OCI-LY7 (cell line): ENCODE measurements at regions of chr19 and their contacts with region 1.

Region 1: GRCh38 chr19:45717166-45717982 is 13.3 kb downstream of the FBXO46 start:
- DNase-seq: peak; percentile 99
- H3K4me3 ChIP-seq: peak overlapping the region; percentile 87
- H3K27ac ChIP-seq: peak overlapping the region; percentile 71
- H3K4me1 ChIP-seq: peaks cover 29% of the 10 kb centered on the region
- CTCF ChIP-seq: peak; percentile 55

Region 2: DNA sequence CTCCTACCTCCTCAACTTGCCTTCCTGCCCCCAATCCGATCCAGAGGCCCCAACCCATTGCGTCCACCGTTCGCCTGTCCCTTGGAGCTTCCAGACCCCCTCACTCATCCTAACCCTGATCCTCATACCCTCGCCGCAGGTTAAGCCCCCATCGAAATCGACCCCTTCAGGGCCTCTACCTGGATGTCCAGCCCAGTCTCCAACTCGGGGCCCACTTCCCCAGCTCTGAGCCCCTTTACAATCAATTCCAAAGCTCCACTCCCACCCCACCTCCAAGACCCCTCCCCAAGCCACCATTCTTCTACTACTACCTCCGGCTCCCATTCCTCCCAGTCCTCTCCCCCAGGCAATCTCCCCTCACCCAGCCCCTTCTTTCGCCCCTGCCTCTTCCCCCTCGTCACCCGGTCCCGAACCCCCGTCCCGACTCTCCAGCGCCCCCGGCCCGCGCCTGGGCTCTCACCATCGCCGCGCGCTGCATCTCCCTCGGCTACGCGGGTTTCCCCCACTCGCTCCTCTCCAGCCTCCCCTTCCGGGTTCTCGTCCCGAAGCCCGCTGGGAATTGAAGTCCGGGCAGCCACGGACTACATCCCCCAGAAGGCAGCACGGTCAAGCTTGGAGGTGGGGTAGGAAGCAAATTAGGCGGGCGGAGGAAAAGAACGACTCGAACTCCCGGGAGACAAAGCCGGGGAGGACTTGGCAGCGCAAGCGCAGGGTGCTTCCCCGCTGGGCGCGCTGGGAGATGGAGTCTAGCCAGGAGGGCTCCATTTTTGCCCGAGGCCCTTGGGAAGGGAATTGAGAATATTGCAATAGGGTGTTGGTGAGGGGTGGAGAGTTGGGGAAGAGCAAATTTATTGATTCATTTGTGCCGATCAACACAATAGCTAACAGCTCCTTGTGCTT is 13.3 kb after region 1 on chr19 and contains the start of gene FBXO46:
- CTCF ChIA-PET with region 1: no interaction called
- POLR2A ChIA-PET with region 1: interaction called, 13 read pairs
- intact Hi-C with region 1: no loop called
- DNase-seq: peak; percentile 99
- H3K4me3 ChIP-seq: peak within 1 kb of the TSS; percentile 97
- H3K27ac ChIP-seq: peak within 1 kb of the TSS; percentile 36
- H3K4me1 ChIP-seq: peaks cover 11% of the 10 kb centered on the region
- CTCF ChIP-seq: peak; percentile 68
- total RNA-seq, gene FBXO46: 23.9 and 27.5 TPM in 2 replicates

Region 3: DNA sequence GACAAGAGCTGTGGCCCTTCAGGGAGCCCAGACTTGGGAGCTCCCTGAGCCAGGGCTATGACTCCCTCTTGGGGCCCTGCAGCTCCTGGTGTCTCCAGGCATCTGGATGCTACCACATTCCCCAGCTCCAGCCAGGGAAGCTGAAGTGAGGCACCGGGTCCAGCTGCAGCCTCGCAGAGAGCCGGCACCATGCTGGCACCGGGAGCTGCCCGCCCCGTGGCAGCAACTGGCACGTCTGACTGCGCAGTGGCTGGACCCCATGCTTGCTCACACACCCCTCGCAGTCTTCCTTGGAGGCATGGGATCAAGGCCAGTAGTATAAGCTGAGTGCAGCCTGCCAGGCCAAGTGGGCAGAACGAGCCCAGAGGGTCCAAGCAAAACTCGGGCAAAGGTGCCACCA is 316.0 kb after region 1 on chr19:
- CTCF ChIA-PET with region 1: no interaction called
- POLR2A ChIA-PET with region 1: interaction called, 10 read pairs
- intact Hi-C with region 1: no loop called
- DNase-seq: no peak
- H3K4me3 ChIP-seq: no peak overlapping the region
- H3K27ac ChIP-seq: no peak overlapping the region
- H3K4me1 ChIP-seq: no peaks in the 10 kb centered on the region
- CTCF ChIP-seq: no peak

Region 4: DNA sequence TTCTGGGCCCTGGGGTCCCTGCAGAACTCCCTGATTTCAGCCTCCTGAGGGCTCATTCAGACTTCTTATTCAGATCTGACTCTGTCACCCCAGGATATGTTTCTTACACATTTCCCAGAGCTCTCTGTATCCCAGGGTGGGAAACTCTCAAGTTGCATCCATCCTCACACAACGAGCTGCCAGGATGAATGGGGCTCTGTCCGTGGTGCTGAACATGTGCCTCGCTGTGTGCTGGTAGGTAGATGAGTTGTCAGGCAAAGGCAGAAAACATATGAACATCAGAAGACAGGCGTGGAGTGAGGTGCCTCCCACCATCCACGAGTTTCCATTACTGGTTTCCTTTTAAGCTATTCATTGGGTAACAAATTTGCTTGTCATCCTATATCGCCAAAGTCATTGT is 500.8 kb after region 1 on chr19:
- CTCF ChIA-PET with region 1: no interaction called
- POLR2A ChIA-PET with region 1: no interaction called
- intact Hi-C with region 1: no loop called
- DNase-seq: peak; percentile 14
- H3K4me3 ChIP-seq: no peak overlapping the region
- H3K27ac ChIP-seq: no peak overlapping the region
- H3K4me1 ChIP-seq: no peaks in the 10 kb centered on the region
- CTCF ChIP-seq: no peak